CD4-positive, alpha-beta T cell (primary cell): ENCODE measurements at regions of chr16 and their contacts with region 1.

Region 1: GRCh38 chr16:30571695-30572600 is at the start of gene ZNF688:
- DNase-seq: peak; percentile 87 to 99 (median 92)
- ATAC-seq: peak; percentile 79
- H3K4me3 ChIP-seq: peak within 1 kb of the TSS; percentile 94
- H3K4me3 Mint-ChIP-seq: peak within 1 kb of the TSS; percentile 98
- H3K27ac ChIP-seq: peak within 1 kb of the TSS; percentile 90 to 96
- H3K27ac Mint-ChIP-seq: peak within 1 kb of the TSS; percentile 97
- H3K4me1 ChIP-seq: peaks cover 51% of the 10 kb centered on the region
- H3K4me1 Mint-ChIP-seq: peaks cover 42% of the 10 kb centered on the region
- H3K27me3 ChIP-seq: no peaks in the 10 kb centered on the region
- H3K27me3 Mint-ChIP-seq: no peaks in the 10 kb centered on the region
- CTCF ChIP-seq: no peak
- total RNA-seq, gene ZNF688: 8.8 to 9.6 TPM

Region 2: GRCh38 chr16:30499284-30499683 is 72.7 kb before region 1 on chr16:
- CTCF ChIA-PET with region 1: no interaction called
- POLR2A ChIA-PET with region 1: no interaction called
- intact Hi-C with region 1: no loop called
- DNase-seq: no peak
- ATAC-seq: no peak
- H3K4me3 ChIP-seq: no peak overlapping the region
- H3K4me3 Mint-ChIP-seq: no peak overlapping the region
- H3K27ac ChIP-seq: no peak overlapping the region
- H3K27ac Mint-ChIP-seq: no peak overlapping the region
- H3K4me1 ChIP-seq: peaks cover 10% of the 10 kb centered on the region
- H3K4me1 Mint-ChIP-seq: peaks cover 9% of the 10 kb centered on the region
- H3K27me3 ChIP-seq: no peaks in the 10 kb centered on the region
- H3K27me3 Mint-ChIP-seq: no peaks in the 10 kb centered on the region
- CTCF ChIP-seq: no peak

Region 3: DNA sequence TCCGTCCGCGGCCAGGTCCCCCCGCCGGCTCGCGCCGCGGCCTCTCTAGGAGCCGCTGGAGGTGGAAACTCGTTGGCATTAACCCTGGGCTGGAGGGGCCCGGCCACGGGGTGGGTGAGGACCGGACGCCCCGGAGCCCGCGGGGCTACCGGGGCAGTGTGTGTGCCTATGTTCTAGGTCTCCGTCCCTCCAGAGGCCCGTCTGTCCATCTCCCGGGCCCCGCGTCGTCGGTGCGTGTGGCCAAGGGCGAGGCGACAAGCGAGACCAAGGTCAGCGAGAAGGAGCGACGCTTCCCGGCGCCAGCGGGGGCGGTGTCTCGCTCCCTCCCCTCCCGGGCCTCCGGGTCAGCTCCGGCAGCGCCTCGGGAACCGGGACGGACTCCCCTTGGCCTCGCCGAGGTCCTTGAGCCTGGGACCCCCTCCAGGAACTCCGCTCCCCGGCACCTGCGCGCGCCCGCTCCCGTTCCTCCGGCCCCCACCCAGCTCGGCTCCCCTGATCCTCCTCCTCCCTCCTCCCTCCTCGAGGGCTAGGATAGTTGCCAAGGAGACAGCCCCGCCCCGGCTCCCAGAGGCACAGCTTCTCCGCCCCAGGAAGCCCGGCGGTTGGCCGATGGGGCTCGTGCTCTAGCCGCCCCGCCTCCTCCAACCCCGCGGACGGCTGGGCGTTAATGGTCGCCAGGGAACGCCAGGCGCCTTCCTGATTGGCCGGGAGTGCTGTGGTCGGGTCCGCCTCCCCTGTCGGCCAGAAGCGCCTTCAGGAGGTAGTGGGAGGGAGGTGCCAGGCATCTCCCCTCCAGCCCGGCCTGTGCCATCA is 44.9 kb before region 1 on chr16:
- CTCF ChIA-PET with region 1: interaction called, 4 read pairs
- POLR2A ChIA-PET with region 1: interaction called, 23 read pairs
- intact Hi-C with region 1: no loop called
- DNase-seq: peak; percentile 57 to 95 (median 86)
- ATAC-seq: peak; percentile 71
- H3K4me3 ChIP-seq: peak overlapping the region; percentile 83
- H3K4me3 Mint-ChIP-seq: peak overlapping the region; percentile 88
- H3K27ac ChIP-seq: peak overlapping the region; percentile 76 to 81
- H3K27ac Mint-ChIP-seq: peak overlapping the region; percentile 81
- H3K4me1 ChIP-seq: peaks cover 49% of the 10 kb centered on the region
- H3K4me1 Mint-ChIP-seq: peaks cover 26% of the 10 kb centered on the region
- H3K27me3 ChIP-seq: no peaks in the 10 kb centered on the region
- H3K27me3 Mint-ChIP-seq: no peaks in the 10 kb centered on the region
- CTCF ChIP-seq: peak; percentile 18

Region 4: GRCh38 chr16:30551781-30552180 is 20.2 kb before region 1 on chr16:
- CTCF ChIA-PET with region 1: no interaction called
- POLR2A ChIA-PET with region 1: interaction called, 152 read pairs
- intact Hi-C with region 1: no loop called
- DNase-seq: peak; percentile 32 to 93 (median 64)
- ATAC-seq: peak; percentile 86
- H3K4me3 ChIP-seq: peak overlapping the region; percentile 22
- H3K4me3 Mint-ChIP-seq: peak overlapping the region; percentile 79
- H3K27ac ChIP-seq: peak overlapping the region; percentile 48 to 56
- H3K27ac Mint-ChIP-seq: peak overlapping the region; percentile 89
- H3K4me1 ChIP-seq: peaks cover 68% of the 10 kb centered on the region
- H3K4me1 Mint-ChIP-seq: peaks cover 50% of the 10 kb centered on the region
- H3K27me3 ChIP-seq: no peaks in the 10 kb centered on the region
- H3K27me3 Mint-ChIP-seq: no peaks in the 10 kb centered on the region
- CTCF ChIP-seq: no peak

Region 5: GRCh38 chr16:30609926-30610839 is 38.2 kb after region 1 on chr16 and contains the start of gene ZNF689:
- CTCF ChIA-PET with region 1: no interaction called
- POLR2A ChIA-PET with region 1: interaction called, 15 read pairs
- intact Hi-C with region 1: no loop called
- DNase-seq: peak; percentile 88 to 97 (median 94)
- ATAC-seq: peak; percentile 92
- H3K4me3 ChIP-seq: peak within 1 kb of the TSS; percentile 74
- H3K4me3 Mint-ChIP-seq: peak within 1 kb of the TSS; percentile 91
- H3K27ac ChIP-seq: peak within 1 kb of the TSS; percentile 86 to 89
- H3K27ac Mint-ChIP-seq: peak within 1 kb of the TSS; percentile 93
- H3K4me1 ChIP-seq: peaks cover 26% of the 10 kb centered on the region
- H3K4me1 Mint-ChIP-seq: peaks cover 23% of the 10 kb centered on the region
- H3K27me3 ChIP-seq: no peaks in the 10 kb centered on the region
- H3K27me3 Mint-ChIP-seq: no peaks in the 10 kb centered on the region
- CTCF ChIP-seq: no peak
- total RNA-seq, gene ZNF689: 15.3 to 15.7 TPM

Region 6: GRCh38 chr16:30650369-30651123 is 78.6 kb after region 1 on chr16 and contains the start of gene PRR14:
- CTCF ChIA-PET with region 1: interaction called, 4 read pairs
- POLR2A ChIA-PET with region 1: interaction called, 21 read pairs
- intact Hi-C with region 1: loop called in 1 of 2 experiments (anchors 1 kb)
- DNase-seq: peak; percentile 96 to 99 (median 98)
- ATAC-seq: peak; percentile 89
- H3K4me3 ChIP-seq: peak within 1 kb of the TSS; percentile 86
- H3K4me3 Mint-ChIP-seq: peak within 1 kb of the TSS; percentile 99
- H3K27ac ChIP-seq: peak within 1 kb of the TSS; percentile 84 to 96
- H3K27ac Mint-ChIP-seq: peak within 1 kb of the TSS; percentile 95
- H3K4me1 ChIP-seq: peaks cover 30% of the 10 kb centered on the region
- H3K4me1 Mint-ChIP-seq: peaks cover 22% of the 10 kb centered on the region
- H3K27me3 ChIP-seq: no peaks in the 10 kb centered on the region
- H3K27me3 Mint-ChIP-seq: no peaks in the 10 kb centered on the region
- CTCF ChIP-seq: no peak
- total RNA-seq, gene PRR14: 50.2 to 51.7 TPM